ENCODE measurements at regions of chr9 and their contacts with region 1.

Region 1: GRCh38 chr9:135907431-135908092 is at the start of gene CAMSAP1:
- DNase-seq: peak; percentile 91
- H3K4me3 Mint-ChIP-seq: peak within 1 kb of the TSS; percentile 90
- H3K27ac Mint-ChIP-seq: peak within 1 kb of the TSS; percentile 89
- H3K4me1 Mint-ChIP-seq: peaks cover 50% of the 10 kb centered on the region
- H3K27me3 Mint-ChIP-seq: no peaks in the 10 kb centered on the region
- total RNA-seq, gene CAMSAP1: 43.3 and 43.8 TPM in 2 replicates

Region 2: GRCh38 chr9:135864447-135865049 is 43.0 kb before region 1 on chr9:
- intact Hi-C with region 1: loop called (anchors 2 kb)
- DNase-seq: peak; percentile 39
- H3K4me3 Mint-ChIP-seq: no peak overlapping the region
- H3K27ac Mint-ChIP-seq: no peak overlapping the region
- H3K4me1 Mint-ChIP-seq: peaks cover 28% of the 10 kb centered on the region
- H3K27me3 Mint-ChIP-seq: no peaks in the 10 kb centered on the region

Region 3: GRCh38 chr9:135926402-135927194 is 19.0 kb after region 1 on chr9:
- intact Hi-C with region 1: loop called (anchors 1 kb)
- DNase-seq: peak; percentile 72
- H3K4me3 Mint-ChIP-seq: peak overlapping the region; percentile 7
- H3K27ac Mint-ChIP-seq: peak overlapping the region; percentile 87
- H3K4me1 Mint-ChIP-seq: peaks cover 27% of the 10 kb centered on the region
- H3K27me3 Mint-ChIP-seq: no peaks in the 10 kb centered on the region

Region 4: DNA sequence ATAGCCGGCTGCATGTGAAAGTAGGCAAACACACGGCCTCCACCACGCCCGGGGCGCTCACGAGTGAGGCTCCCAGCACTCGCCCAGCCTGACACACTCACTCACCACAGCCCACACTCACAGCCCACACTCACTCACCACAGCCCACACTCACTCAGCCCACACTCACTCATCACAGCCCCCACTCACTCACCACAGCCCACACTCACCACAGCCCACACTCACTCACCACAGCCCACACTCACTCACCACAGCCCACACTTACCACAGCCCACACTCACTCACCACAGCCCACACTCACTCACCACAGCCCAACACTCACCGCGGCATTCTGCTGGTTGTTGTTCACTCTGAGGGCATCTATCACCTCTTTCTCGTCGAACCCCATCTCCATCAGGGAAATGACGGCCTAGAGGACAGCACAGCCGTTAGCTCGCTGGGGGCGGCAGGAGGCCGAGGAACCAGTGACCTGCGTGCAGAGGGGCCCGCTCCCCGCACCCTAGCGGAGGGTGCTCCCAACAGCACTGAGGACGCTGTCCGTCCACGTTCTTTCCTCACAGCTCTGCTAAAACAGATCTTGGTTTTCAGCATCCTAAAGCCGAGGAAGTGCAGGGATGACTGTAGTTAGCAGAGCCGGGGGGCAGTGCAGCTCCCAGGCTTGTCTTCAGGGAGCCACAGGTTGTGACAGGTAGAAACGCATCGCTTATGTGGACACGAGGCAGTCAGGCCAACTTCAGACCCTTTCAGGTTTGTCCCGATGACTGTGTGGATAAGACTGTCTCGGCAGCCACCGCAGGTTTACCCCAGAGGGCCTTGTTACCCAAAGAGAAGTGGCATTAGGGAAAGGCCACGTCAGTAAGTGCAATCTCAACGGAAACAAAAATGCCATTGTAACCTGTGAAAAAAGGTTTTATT is 32.0 kb after region 1 on chr9:
- intact Hi-C with region 1: no loop called
- DNase-seq: peak; percentile 38
- H3K4me3 Mint-ChIP-seq: peak overlapping the region; percentile 32
- H3K27ac Mint-ChIP-seq: peak overlapping the region; percentile 96
- H3K4me1 Mint-ChIP-seq: peaks cover 7% of the 10 kb centered on the region
- H3K27me3 Mint-ChIP-seq: peaks cover 8% of the 10 kb centered on the region

Region 5: DNA sequence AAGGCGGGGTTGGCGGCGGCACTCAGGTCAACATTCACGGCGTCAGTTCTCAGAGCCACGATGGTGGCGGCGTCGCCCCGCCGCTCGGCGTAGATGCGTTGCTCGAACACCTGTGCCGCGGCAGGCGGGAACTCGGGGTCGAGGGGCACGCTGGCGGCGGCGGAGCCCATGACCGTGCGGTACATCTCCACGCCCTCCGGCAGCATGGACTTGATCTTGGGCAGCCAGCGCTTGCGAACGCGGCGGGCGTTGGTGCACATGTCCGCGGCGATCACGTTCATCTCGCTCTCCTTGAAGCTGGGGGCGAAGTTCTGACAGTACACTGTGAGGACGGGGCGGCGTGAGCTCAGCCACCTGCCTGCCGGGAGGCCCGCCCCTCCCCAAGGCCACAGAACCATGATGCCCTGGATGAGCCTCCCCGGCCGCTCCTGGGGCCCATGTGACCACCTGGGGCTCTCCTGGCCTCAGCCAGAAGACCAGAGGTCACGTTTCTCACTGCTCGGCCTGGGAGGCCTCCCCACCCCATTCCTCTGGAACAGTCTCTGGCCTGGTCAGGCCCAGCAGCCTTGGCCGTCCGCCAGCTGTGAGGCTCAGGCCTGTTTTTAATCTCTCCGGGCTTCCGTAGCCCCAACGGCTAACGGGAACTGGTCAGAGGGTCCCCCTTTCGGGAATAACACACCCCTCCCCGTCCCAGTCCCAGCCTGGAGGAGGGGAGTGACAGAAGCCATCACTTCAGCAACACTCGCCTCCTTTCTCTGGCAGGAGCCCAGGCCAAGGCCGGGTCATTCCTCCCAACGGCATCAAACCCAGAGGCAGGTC is 104.3 kb after region 1 on chr9:
- intact Hi-C with region 1: no loop called
- DNase-seq: no peak
- H3K4me3 Mint-ChIP-seq: no peak overlapping the region
- H3K27ac Mint-ChIP-seq: no peak overlapping the region
- H3K4me1 Mint-ChIP-seq: no peaks in the 10 kb centered on the region
- H3K27me3 Mint-ChIP-seq: no peaks in the 10 kb centered on the region

Region 6: DNA sequence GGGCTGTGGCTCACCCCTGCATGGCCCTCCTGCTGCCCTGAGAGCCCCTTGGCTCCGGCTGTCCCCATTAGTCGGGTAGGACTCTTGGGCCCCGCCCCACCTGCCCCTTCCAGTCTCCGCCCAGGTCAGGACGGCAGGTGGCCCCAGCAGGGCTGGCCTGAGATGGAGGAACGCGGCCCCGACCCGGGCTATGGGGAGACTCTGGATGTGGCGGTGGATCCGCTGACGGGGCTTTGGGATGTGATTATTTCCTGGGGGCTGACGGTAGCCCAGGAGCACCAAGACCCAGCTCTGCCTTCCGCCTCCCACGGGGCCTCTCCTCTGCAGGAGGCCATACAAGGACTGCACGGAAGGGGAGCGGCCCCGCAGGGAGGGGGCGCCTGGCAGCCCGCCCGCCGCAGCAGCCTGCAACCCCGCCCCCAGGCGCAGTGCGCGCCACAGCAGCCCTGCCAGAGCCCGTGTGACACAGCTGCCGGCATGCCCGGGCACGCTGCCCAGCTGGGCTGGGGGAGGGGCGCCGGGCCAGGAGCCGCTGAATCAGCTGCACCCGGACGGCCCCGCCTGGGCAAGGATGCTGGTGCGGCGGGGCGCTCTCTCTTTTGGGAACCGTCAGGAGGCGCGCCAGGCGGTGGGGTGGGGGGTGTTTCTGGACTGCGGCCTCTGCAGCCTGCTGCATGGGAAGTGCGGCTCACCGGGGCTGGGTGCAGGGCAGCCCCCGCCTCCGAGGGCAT is 202.0 kb after region 1 on chr9:
- intact Hi-C with region 1: loop called (anchors 2 kb)
- DNase-seq: peak; percentile 90
- H3K4me3 Mint-ChIP-seq: peak overlapping the region; percentile 85
- H3K27ac Mint-ChIP-seq: peak overlapping the region; percentile 84
- H3K4me1 Mint-ChIP-seq: peaks cover 39% of the 10 kb centered on the region
- H3K27me3 Mint-ChIP-seq: peaks cover 3% of the 10 kb centered on the region

Region 7: GRCh38 chr9:136267261-136268111 is 359.9 kb after region 1 on chr9:
- intact Hi-C with region 1: loop called (anchors 5 kb)
- DNase-seq: peak; percentile 81
- H3K4me3 Mint-ChIP-seq: peak overlapping the region; percentile 83
- H3K27ac Mint-ChIP-seq: peak overlapping the region; percentile 70
- H3K4me1 Mint-ChIP-seq: peaks cover 6% of the 10 kb centered on the region
- H3K27me3 Mint-ChIP-seq: peaks cover 7% of the 10 kb centered on the region

Region 8: GRCh38 chr9:136787690-136788400 is 880.3 kb after region 1 on chr9:
- intact Hi-C with region 1: no loop called
- DNase-seq: peak; percentile 69
- H3K4me3 Mint-ChIP-seq: no peak overlapping the region
- H3K27ac Mint-ChIP-seq: no peak overlapping the region
- H3K4me1 Mint-ChIP-seq: peaks cover 25% of the 10 kb centered on the region
- H3K27me3 Mint-ChIP-seq: peaks cover 7% of the 10 kb centered on the region

Region 9: GRCh38 chr9:137605121-137606004 is 1697.8 kb after region 1 on chr9 and contains the start of gene ARRDC1:
- intact Hi-C with region 1: loop called (anchors 5 kb)
- DNase-seq: peak; percentile 85
- H3K4me3 Mint-ChIP-seq: peak within 1 kb of the TSS; percentile 85
- H3K27ac Mint-ChIP-seq: peak within 1 kb of the TSS; percentile 74
- H3K4me1 Mint-ChIP-seq: peaks cover 20% of the 10 kb centered on the region
- H3K27me3 Mint-ChIP-seq: peaks cover 6% of the 10 kb centered on the region
- total RNA-seq, gene ARRDC1: 65.7 and 70.3 TPM in 2 replicates